CD4-positive, alpha-beta memory T cell (primary cell): ENCODE measurements at regions of chr1 and their contacts with region 1.

Region 1: GRCh38 chr1:235206533-235207208 is 45.6 kb upstream of the RBM34 start:
- DNase-seq: peak in 3 of 5 donors; percentile 4 to 52 (median 20)
- H3K4me3 ChIP-seq: no peak overlapping the region
- H3K4me3 Mint-ChIP-seq: peak overlapping the region in 7 of 8 donors; percentile 1 to 67 (median 59)
- H3K27ac ChIP-seq: peak overlapping the region; percentile 20
- H3K27ac Mint-ChIP-seq: peak overlapping the region; percentile 25 to 91 (median 65)
- H3K4me1 ChIP-seq: peaks cover 19% of the 10 kb centered on the region
- H3K4me1 Mint-ChIP-seq: peaks cover 19 to 31% (median 25%) of the 10 kb centered on the region in 4 donors
- H3K27me3 ChIP-seq: no peaks in the 10 kb centered on the region
- H3K27me3 Mint-ChIP-seq: no peaks in the 10 kb centered on the region

Region 2: DNA sequence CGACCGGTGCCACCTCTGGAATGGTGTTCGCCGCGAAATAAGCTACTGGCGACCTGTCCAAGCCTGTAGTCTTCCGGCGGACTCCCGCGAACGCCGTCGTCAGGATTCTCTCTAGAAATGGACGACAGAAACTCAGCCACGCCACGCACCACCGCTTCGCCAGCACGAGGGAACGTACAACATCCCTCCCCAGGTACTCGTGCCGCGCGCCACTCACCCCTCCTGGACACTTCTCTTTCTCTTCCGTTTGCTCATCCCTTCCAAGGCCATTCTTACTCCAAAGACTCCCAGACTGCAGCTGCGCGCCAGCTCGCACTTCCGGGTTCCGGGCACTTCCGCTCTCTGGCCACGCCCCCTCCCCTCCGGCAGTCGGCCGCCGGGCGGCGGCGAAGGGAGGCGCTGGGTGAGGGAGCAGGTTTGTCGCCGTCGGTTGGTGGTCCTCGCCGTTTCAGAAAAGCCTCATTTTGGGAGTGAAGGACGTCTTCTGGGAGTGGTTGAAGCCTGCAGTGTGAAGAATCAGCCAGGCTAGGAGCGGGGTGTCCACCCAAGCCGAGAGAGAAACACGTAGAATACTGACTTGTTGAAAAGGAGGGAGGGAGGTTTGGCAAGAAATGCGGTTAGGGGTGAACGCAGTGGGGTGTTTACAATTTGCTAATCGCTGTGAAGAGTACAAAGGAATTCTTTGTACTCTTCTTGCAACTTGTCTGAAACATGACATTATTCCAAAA is 45.5 kb before region 1 on chr1 and contains the start of gene RBM34:
- CTCF ChIA-PET with region 1: interaction called, 3 read pairs
- POLR2A ChIA-PET with region 1: interaction called, 6 read pairs
- intact Hi-C with region 1: loop called (anchors 5 kb)
- DNase-seq: peak; percentile 90 to 93 (median 91)
- H3K4me3 ChIP-seq: peak within 1 kb of the TSS; percentile 79 to 80
- H3K4me3 Mint-ChIP-seq: peak within 1 kb of the TSS; percentile 94 to 99 (median 98)
- H3K27ac ChIP-seq: peak within 1 kb of the TSS; percentile 92
- H3K27ac Mint-ChIP-seq: peak within 1 kb of the TSS; percentile 95 to 99 (median 98)
- H3K4me1 ChIP-seq: peaks cover 50% of the 10 kb centered on the region
- H3K4me1 Mint-ChIP-seq: peaks cover 15 to 30% (median 22%) of the 10 kb centered on the region in 4 donors
- H3K27me3 ChIP-seq: no peaks in the 10 kb centered on the region
- H3K27me3 Mint-ChIP-seq: no peaks in the 10 kb centered on the region
- total RNA-seq, gene RBM34: 120 TPM

Region 3: DNA sequence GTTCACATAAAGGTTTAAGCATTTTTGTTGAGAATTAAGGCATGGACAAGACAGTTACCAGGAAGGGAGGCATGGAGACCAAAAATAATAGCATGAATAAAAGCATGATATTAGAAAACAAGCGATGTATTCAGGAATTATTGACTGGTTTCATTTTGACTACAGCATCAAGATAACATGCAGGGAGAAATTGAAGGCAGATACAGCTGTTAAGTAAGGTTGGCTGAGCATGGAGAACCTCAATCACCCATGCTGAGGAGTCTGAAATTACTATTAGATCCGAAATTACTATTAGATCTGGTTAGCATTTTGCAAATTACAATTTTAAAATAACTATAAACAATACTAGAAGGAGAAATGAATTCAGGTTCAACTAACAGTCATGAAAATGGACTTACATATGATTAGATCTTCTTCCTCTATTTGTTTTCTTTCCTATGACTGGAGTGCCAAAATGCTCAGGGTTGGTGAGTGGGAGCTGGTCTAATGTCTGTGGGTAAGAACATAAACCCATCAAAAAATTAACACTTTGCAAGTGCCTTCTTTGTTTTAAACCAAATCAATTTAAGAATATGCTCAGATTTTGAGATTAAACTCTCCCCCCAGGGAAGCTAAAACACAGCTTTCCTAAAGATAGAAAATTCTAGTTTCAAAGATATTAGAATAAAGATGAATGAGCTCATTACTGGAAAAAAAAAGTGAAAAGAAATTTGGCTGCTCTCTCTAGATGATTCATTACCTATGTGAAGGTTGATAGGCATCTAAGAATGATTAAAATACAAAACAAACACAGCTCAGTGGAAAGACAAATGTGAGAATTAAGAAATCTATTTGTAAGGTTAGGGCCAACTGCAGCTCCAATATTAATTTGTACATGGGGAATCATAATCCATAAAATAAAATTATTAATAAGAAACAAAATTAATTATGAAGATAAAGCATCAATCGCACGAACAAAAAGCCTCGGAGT is 39.6 kb after region 1 on chr1:
- CTCF ChIA-PET with region 1: no interaction called
- POLR2A ChIA-PET with region 1: no interaction called
- intact Hi-C with region 1: loop called (anchors 5 kb)
- DNase-seq: no peak
- H3K4me3 ChIP-seq: no peak overlapping the region
- H3K4me3 Mint-ChIP-seq: peak overlapping the region in 6 of 8 donors; percentile 12 to 80 (median 62)
- H3K27ac ChIP-seq: peak overlapping the region; percentile 14
- H3K27ac Mint-ChIP-seq: peak overlapping the region; percentile 45 to 82 (median 77)
- H3K4me1 ChIP-seq: peaks cover 35% of the 10 kb centered on the region
- H3K4me1 Mint-ChIP-seq: peaks cover 33 to 54% (median 41%) of the 10 kb centered on the region in 4 donors
- H3K27me3 ChIP-seq: no peaks in the 10 kb centered on the region
- H3K27me3 Mint-ChIP-seq: no peaks in the 10 kb centered on the region

Region 4: DNA sequence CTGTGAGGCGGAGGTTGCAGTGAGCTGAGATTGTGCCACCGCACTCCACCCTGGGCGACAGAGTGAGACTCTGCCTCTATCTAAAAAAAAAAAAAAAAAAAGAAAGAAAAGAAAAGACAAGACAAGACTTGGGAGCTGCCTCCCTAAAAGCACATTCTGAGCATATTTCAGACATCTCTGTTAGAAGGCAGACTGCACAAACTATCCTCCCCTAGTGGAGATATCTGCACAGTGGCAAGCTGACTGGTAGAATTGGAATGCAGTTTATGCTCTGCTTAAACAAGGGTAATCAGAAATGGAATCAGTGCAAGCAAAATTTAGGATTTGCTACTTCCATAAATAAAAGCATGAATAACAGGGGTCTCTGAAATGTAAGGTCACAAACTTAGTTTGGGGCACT is 411.1 kb after region 1 on chr1:
- CTCF ChIA-PET with region 1: no interaction called
- POLR2A ChIA-PET with region 1: no interaction called
- intact Hi-C with region 1: no loop called
- DNase-seq: no peak
- H3K4me3 ChIP-seq: no peak overlapping the region
- H3K4me3 Mint-ChIP-seq: no peak overlapping the region
- H3K27ac ChIP-seq: no peak overlapping the region
- H3K27ac Mint-ChIP-seq: no peak overlapping the region
- H3K4me1 ChIP-seq: no peaks in the 10 kb centered on the region
- H3K4me1 Mint-ChIP-seq: no peaks in the 10 kb centered on the region
- H3K27me3 ChIP-seq: no peaks in the 10 kb centered on the region
- H3K27me3 Mint-ChIP-seq: peaks cover 0 to 4% of the 10 kb centered on the region in 2 donors